Transverse colon (tissue), 4 donors: ENCODE measurements at regions of chr9 and their contacts with region 1.

Region 1: GRCh38 chr9:6739218-6739617 is 18.6 kb upstream of the KDM4C start:
- DNase-seq: no peak
- H3K4me3 ChIP-seq: no peak overlapping the region
- H3K27ac ChIP-seq: no peak overlapping the region
- H3K4me1 ChIP-seq: no peaks in the 10 kb centered on the region
- H3K27me3 ChIP-seq: no peaks in the 10 kb centered on the region
- CTCF ChIP-seq: no peak
- EP300 ChIP-seq: no peak
- POLR2A ChIP-seq: no peak

Region 2: GRCh38 chr9:6353851-6354686 is 385.1 kb before region 1 on chr9:
- in situ Hi-C with region 1: loop called in 1 of 4 experiments (anchors 25 kb)
- intact Hi-C with region 1: no loop called
- DNase-seq: no peak
- H3K4me3 ChIP-seq: no peak overlapping the region
- H3K27ac ChIP-seq: no peak overlapping the region
- H3K4me1 ChIP-seq: no peaks in the 10 kb centered on the region
- H3K27me3 ChIP-seq: no peaks in the 10 kb centered on the region
- CTCF ChIP-seq: peak; percentile 63 to 80 (median 77)
- EP300 ChIP-seq: no peak
- POLR2A ChIP-seq: no peak

Region 3: GRCh38 chr9:6584881-6585597 is 154.2 kb before region 1 on chr9:
- in situ Hi-C with region 1: loop called in 2 of 4 experiments (anchors 10 to 25 kb)
- intact Hi-C with region 1: no loop called
- DNase-seq: no peak
- H3K4me3 ChIP-seq: no peak overlapping the region
- H3K27ac ChIP-seq: no peak overlapping the region
- H3K4me1 ChIP-seq: no peaks in the 10 kb centered on the region
- H3K27me3 ChIP-seq: no peaks in the 10 kb centered on the region
- CTCF ChIP-seq: peak; percentile 46 to 56 (median 47)
- EP300 ChIP-seq: no peak
- POLR2A ChIP-seq: no peak

Region 4: DNA sequence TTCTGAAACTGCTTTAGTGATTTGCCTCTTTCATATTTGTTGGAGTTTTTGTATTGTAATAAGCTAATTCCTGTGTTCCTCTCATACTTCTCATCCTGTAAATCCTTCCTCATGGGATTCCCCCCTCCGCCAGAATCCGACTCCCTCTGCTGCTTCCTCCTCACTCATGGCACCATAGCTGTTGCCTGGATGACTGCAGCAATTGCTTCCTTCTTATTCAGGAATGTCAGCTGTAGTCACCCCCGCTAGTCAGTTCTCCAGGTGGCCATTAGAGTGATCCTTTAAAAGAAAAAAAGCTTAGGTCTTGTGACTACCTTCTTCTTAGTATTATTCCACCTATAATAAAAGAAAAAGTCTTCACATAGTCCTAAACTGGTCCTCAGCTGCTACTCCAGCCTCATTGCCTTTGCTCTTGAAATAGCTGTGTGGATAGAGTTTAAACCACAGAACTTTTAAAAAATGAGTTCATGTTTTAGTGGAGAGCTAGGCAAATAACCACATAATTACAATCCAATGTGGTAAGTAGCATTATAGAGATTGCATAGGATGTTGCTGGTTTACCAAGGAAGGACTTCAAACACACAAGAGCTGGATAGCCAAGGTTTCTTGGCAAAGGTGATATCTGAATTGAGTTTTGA is 245.8 kb after region 1 on chr9:
- in situ Hi-C with region 1: no loop called
- intact Hi-C with region 1: no loop called
- DNase-seq: no peak
- H3K4me3 ChIP-seq: no peak overlapping the region
- H3K27ac ChIP-seq: no peak overlapping the region
- H3K4me1 ChIP-seq: no peaks in the 10 kb centered on the region
- H3K27me3 ChIP-seq: no peaks in the 10 kb centered on the region
- CTCF ChIP-seq: no peak
- EP300 ChIP-seq: no peak
- POLR2A ChIP-seq: no peak

Region 5: GRCh38 chr9:7443541-7443940 is 704.3 kb after region 1 on chr9:
- in situ Hi-C with region 1: no loop called
- intact Hi-C with region 1: no loop called
- DNase-seq: no peak
- H3K4me3 ChIP-seq: no peak overlapping the region
- H3K27ac ChIP-seq: no peak overlapping the region
- H3K4me1 ChIP-seq: no peaks in the 10 kb centered on the region
- H3K27me3 ChIP-seq: no peaks in the 10 kb centered on the region
- CTCF ChIP-seq: no peak
- EP300 ChIP-seq: no peak
- POLR2A ChIP-seq: no peak